K562 (cell line): ENCODE measurements at regions of chr17 and their contacts with region 1.

Region 1: DNA sequence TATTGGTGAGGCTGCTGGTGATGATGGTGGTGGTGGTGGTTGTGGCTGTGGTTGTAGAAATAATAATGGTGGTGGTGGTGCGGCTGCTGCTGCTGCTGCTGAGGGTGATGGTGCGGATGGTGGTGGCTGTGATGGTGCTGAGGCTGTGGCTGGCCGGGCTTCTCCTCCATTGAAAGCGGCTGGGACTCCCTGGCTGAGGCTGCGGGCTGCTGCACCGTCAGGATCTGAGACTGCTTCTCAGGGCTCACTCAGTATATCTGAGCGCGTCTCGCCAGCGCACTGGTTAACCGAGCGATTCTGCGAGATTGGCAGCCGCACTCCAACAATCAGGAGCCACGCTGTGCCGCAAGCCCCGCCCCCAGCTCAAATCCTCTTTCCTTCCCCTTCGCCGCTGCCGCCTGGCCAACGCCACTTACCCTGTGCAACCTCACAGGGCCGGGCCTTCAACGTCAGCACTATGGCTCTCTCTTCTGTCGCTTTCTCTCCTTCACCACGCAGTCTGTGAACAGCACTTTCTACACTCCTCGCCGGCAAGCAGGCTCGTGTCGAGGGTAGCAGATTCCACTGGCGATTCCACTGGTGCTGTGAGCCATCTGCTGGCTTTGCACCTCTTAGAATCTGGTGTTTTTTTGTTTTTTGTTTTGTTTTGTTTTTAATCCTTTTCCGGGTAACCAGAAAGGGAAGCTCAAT is at the start of gene NUFIP2:
- DNase-seq: peak; percentile 85 to 99 (median 92)
- ATAC-seq: peak; percentile 93
- H3K4me3 ChIP-seq: peak within 1 kb of the TSS; percentile 97
- H3K27ac ChIP-seq: peak within 1 kb of the TSS; percentile 92
- H3K4me1 ChIP-seq: peaks cover 10 to 16% of the 10 kb centered on the region in 2 experiments; a peak in 3 of 5 replicates
- H3K27me3 ChIP-seq: no peaks in the 10 kb centered on the region
- CTCF ChIP-seq: peak in 1 of 3 experiments; percentile 28; a peak in 2 of 6 replicates
- EP300 ChIP-seq: peak; percentile 98
- POLR2A ChIP-seq: peak; percentile 99
- RAD21 ChIP-seq: 0 out of 4 replicates have a peak, but pooled peaks of 1 of the 2 experiments have one; percentile 13
- polyA plus RNA-seq, gene NUFIP2: 4.9 to 6.1 TPM

Region 2: GRCh38 chr17:29048440-29049368 is 245.3 kb before region 1 on chr17:
- CTCF ChIA-PET with region 1: no interaction called
- POLR2A ChIA-PET with region 1: no interaction called
- in situ Hi-C with region 1: no loop called
- intact Hi-C with region 1: no loop called
- DNase-seq: no peak
- ATAC-seq: peak; percentile 55
- H3K4me3 ChIP-seq: no peak overlapping the region
- H3K27ac ChIP-seq: no peak overlapping the region
- H3K4me1 ChIP-seq: no peaks in the 10 kb centered on the region
- H3K27me3 ChIP-seq: peaks cover 58 to 66% of the 10 kb centered on the region in 2 experiments
- CTCF ChIP-seq: no peak
- EP300 ChIP-seq: no peak
- POLR2A ChIP-seq: no peak
- RAD21 ChIP-seq: no peak

Region 3: DNA sequence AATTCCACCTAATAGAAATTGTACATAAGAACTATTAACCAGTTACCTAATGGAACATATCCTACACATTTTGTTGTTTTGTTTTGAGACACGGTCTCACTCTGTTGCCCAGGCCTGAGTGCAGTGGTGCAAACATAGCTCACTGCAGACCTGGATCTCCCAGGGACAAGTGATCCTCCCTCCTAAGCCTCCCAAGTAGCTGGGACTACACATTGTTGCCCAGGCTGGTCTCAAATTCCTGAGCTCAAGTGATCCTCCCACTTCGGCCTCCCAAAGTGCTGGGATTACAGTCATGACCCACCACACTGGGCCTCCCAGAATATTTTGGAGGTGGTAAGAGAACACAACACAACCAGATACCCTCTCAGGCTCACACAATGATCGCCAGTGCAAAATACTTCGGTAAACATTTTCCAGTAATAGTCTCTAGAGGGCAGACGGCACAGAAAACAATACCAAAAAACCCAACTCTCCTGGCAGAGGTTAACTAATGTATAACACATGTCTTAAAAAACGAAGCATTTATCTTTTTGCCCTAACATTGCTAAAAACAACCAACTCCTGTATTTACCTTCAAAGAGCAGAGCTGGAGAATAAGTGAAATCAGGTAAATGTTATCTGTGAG is 10.7 kb before region 1 on chr17:
- CTCF ChIA-PET with region 1: no interaction called
- POLR2A ChIA-PET with region 1: interaction called, 22 read pairs
- in situ Hi-C with region 1: no loop called
- intact Hi-C with region 1: no loop called
- DNase-seq: no peak
- ATAC-seq: peak; percentile 47
- H3K4me3 ChIP-seq: no peak overlapping the region
- H3K27ac ChIP-seq: no peak overlapping the region
- H3K4me1 ChIP-seq: no peaks in the 10 kb centered on the region
- H3K27me3 ChIP-seq: no peaks in the 10 kb centered on the region
- CTCF ChIP-seq: 0 out of 6 replicates have a peak, but pooled peaks of 1 of the 3 experiments have one; percentile 10
- EP300 ChIP-seq: no peak
- POLR2A ChIP-seq: no peak
- RAD21 ChIP-seq: no peak

Region 4: DNA sequence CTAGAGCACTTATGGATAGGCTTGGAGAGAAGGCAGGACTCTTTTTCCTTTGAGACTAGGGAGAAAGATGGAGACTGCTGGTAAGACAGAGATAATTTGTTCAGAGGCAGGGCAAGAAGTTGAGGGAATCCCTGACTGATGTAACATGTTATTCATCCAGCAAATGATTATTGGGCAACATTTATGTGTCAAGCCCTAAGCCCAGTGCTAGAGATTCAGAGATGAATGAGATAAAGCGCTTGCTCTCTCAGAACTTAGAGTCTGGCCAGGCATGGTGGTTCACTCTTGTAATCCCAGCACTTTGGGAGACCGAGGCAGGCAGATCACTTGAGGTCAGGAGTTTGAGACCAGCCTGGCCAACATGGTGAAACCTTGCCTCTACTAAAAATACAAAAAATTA is 47.7 kb after region 1 on chr17:
- CTCF ChIA-PET with region 1: no interaction called
- POLR2A ChIA-PET with region 1: interaction called, 4 read pairs
- in situ Hi-C with region 1: no loop called
- intact Hi-C with region 1: loop called (anchors 5 kb)
- DNase-seq: no peak
- ATAC-seq: no peak
- H3K4me3 ChIP-seq: no peak overlapping the region
- H3K27ac ChIP-seq: no peak overlapping the region
- H3K4me1 ChIP-seq: no peaks in the 10 kb centered on the region; a peak in 1 of 5 replicates
- H3K27me3 ChIP-seq: peaks cover 46 to 67% of the 10 kb centered on the region in 2 experiments
- CTCF ChIP-seq: no peak
- EP300 ChIP-seq: no peak
- POLR2A ChIP-seq: no peak
- RAD21 ChIP-seq: no peak

Region 5: DNA sequence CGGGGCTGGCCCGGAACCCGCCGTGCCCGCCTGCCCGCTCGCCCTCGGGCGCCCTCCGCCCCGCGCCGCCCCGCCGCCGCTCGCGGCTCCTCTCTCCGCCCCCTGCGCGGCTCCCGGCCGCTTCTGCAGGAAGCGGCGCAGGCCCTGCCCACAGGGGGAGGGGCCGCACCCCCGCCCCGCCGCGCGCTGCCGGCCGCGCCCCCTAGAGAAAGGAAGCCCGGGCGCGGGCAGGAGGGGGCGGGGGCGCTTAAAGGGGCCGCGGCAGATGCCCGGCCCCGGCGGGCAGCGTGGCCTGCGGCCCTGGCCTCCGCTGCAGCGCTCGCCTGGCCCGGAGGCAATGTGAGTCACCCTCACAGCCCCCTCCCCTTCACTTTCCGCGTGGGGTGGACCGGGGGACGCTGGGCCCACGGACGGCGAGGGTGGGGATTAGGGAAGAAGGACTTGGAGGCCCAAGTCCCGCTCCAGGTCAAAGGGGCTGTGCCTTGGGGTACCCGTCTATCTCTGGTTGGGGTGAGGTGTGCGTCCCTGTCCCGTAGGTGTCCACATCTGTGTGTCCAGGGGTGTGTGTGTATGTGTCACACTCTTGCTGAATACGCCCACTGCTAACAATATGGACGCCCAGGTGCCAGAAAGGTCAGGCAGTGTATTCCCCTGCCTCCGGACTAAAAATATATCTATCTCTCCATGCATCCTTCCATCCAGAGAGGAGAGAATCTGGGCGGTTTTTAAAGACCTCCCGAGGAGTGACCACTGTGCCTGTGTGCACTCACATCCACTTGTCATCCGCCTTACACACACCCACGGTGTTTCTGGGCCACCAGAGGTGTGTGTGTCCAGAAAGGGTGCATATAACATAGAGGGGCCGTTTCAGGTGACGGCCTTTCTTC is 295.7 kb after region 1 on chr17 and contains the start of gene GIT1:
- CTCF ChIA-PET with region 1: interaction called, 3 read pairs
- POLR2A ChIA-PET with region 1: no interaction called
- in situ Hi-C with region 1: no loop called
- intact Hi-C with region 1: loop called (anchors 2 kb)
- DNase-seq: peak; percentile 89 to 96 (median 90)
- ATAC-seq: peak; percentile 80
- H3K4me3 ChIP-seq: peak within 1 kb of the TSS; percentile 56
- H3K27ac ChIP-seq: peak within 1 kb of the TSS; percentile 62
- H3K4me1 ChIP-seq: peaks cover 38 to 78% of the 10 kb centered on the region in 2 experiments
- H3K27me3 ChIP-seq: no peaks in the 10 kb centered on the region
- CTCF ChIP-seq: 0 out of 6 replicates have a peak, but pooled peaks of 1 of the 3 experiments have one; percentile 10
- EP300 ChIP-seq: no peak
- POLR2A ChIP-seq: no peak
- RAD21 ChIP-seq: no peak
- polyA plus RNA-seq, gene GIT1: 0.35 to 0.38 TPM

Region 6: GRCh38 chr17:29740017-29740416 is 446.0 kb after region 1 on chr17:
- CTCF ChIA-PET with region 1: no interaction called
- POLR2A ChIA-PET with region 1: no interaction called
- in situ Hi-C with region 1: no loop called
- intact Hi-C with region 1: no loop called
- DNase-seq: peak in 2 of 4 experiments; percentile 32 to 37
- ATAC-seq: no peak
- H3K4me3 ChIP-seq: no peak overlapping the region
- H3K27ac ChIP-seq: no peak overlapping the region
- H3K4me1 ChIP-seq: peaks cover 7% of the 10 kb centered on the region in 2 experiments; a peak in 3 of 5 replicates
- H3K27me3 ChIP-seq: no peaks in the 10 kb centered on the region
- CTCF ChIP-seq: no peak
- EP300 ChIP-seq: no peak
- POLR2A ChIP-seq: no peak
- RAD21 ChIP-seq: no peak